ENCODE measurements at regions of chr17 and their contacts with region 1.

Region 1: DNA sequence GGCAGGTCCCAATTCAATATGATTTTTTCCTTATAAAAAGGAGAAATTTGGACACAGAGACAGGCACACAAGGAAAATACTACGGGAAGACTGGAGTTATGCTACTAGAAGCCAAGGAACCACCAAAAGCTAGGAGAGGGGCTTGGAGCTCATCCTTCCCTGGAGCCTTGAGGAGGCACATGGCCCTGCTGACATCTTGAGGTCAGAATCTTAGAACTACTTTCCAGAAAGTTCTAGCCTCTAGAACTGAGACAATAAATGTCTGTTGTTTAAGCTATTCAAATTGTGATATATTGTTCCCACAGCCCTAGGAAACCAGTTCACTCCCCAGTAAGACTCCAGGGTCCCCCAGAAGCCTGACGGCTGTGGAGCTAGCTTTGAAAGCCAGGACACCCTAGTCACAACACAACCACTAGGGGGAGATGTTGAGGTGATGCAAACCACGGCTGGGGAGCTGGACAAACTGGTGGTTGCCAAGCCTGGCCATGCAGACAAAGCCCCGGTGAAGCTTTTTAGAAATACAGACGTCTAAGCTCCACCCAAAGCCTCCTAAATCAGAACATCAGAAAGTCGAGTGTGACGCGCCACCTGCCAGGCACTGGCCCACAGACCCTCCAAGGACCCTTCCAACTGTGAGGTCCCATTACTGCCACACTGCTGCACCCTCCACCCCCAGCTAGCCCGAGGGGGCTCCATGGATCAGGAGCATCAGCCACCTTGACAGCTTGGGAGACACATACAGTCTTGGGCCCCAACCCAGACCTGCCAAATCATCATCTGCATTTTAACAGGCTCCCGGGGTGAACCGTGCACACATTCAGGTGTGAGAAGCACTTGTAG is 106.4 kb downstream of the SLC39A11 start:
- DNase-seq: peak; percentile 56
- H3K4me3 ChIP-seq: no peak overlapping the region
- H3K27ac ChIP-seq: no peak overlapping the region
- H3K27me3 ChIP-seq: no peaks in the 10 kb centered on the region
- CTCF ChIP-seq: peak; percentile 91

Region 2: GRCh38 chr17:72967977-72968585 is 18.0 kb before region 1 on chr17:
- CTCF ChIA-PET with region 1: interaction called, 12 read pairs
- POLR2A ChIA-PET with region 1: interaction called, 3 read pairs
- DNase-seq: no peak
- H3K4me3 ChIP-seq: no peak overlapping the region
- H3K27ac ChIP-seq: no peak overlapping the region
- H3K27me3 ChIP-seq: no peaks in the 10 kb centered on the region
- CTCF ChIP-seq: no peak

Region 3: GRCh38 chr17:73007407-73007806 is 21.3 kb after region 1 on chr17:
- CTCF ChIA-PET with region 1: interaction called, 18 read pairs
- POLR2A ChIA-PET with region 1: no interaction called
- DNase-seq: no peak
- H3K4me3 ChIP-seq: no peak overlapping the region
- H3K27ac ChIP-seq: peak overlapping the region; percentile 47
- H3K27me3 ChIP-seq: no peaks in the 10 kb centered on the region
- CTCF ChIP-seq: no peak

Region 4: GRCh38 chr17:73156166-73156840 is 170.2 kb after region 1 on chr17:
- CTCF ChIA-PET with region 1: interaction called, 30 read pairs
- POLR2A ChIA-PET with region 1: no interaction called
- DNase-seq: peak; percentile 27
- H3K4me3 ChIP-seq: no peak overlapping the region
- H3K27ac ChIP-seq: no peak overlapping the region
- H3K27me3 ChIP-seq: peaks cover 15% of the 10 kb centered on the region
- CTCF ChIP-seq: peak; percentile 85

Region 5: GRCh38 chr17:73192894-73193701 is 207.0 kb after region 1 on chr17 and contains the start of gene COG1:
- CTCF ChIA-PET with region 1: interaction called, 36 read pairs
- POLR2A ChIA-PET with region 1: no interaction called
- DNase-seq: peak; percentile 59
- H3K4me3 ChIP-seq: peak within 1 kb of the TSS; percentile 93
- H3K27ac ChIP-seq: peak within 1 kb of the TSS; percentile 84
- H3K27me3 ChIP-seq: no peaks in the 10 kb centered on the region
- CTCF ChIP-seq: no peak
- polyA plus RNA-seq, gene COG1: 30.2 and 36.9 TPM in 2 replicates

Measured in AG04450 (cell line).